Pancreas (tissue), 10 donors: ENCODE measurements at regions of chr17 and their contacts with region 1.

Region 1: GRCh38 chr17:32783602-32784001 is 93.3 kb downstream of the MYO1D start:
- DNase-seq: no peak
- ATAC-seq: peak; percentile 73 to 91 (median 89)
- H3K4me3 ChIP-seq: no peak overlapping the region
- H3K27ac ChIP-seq: no peak overlapping the region
- H3K4me1 ChIP-seq: no peaks in the 10 kb centered on the region
- H3K27me3 ChIP-seq: no peaks in the 10 kb centered on the region
- CTCF ChIP-seq: peak; percentile 52 to 79 (median 68)

Region 2: GRCh38 chr17:32621617-32622312 is 161.8 kb before region 1 on chr17:
- intact Hi-C with region 1: no loop called
- DNase-seq: no peak
- ATAC-seq: no peak
- H3K4me3 ChIP-seq: no peak overlapping the region
- H3K27ac ChIP-seq: no peak overlapping the region
- H3K4me1 ChIP-seq: no peaks in the 10 kb centered on the region
- H3K27me3 ChIP-seq: no peaks in the 10 kb centered on the region
- CTCF ChIP-seq: no peak

Region 3: DNA sequence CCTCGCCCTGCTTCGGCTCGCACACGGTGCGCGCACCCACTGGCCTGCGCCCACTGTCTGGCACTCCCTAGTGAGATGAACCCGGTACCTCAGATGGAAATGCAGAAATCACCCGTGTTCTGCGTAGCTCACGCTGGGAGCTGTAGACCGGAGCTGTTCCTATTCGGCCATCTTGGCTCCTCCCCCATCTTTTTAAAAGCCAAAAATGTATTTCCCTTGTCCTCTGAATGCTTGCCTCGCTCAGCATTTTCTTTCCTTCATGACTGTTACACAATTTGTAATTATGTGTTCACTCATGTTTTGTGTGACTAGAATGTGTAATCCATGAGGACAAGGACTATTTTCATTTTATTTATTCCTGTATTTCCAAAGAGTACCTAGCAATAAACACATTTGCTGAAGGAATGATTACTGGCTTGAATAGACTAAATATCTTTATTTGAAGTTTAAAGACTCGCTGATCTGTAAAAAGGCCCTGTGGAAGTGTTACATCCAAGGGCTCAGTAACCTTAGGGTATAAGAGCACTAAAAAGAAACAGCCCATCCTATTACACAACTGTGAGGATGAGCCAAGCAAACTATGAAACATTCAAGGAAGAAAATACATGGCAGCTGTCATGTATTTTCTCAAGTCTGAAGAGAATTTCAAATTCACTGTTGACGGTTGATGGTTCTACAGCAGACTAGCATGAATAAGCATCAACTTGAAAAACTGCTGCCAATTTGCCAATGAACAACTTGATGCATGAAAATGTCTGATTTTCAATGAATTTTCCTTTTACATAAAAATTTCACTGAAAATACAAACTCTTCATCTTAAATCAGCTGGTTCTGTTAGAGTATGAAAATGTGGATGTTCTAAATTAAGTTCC is 99.3 kb before region 1 on chr17:
- intact Hi-C with region 1: no loop called
- DNase-seq: no peak
- ATAC-seq: no peak
- H3K4me3 ChIP-seq: no peak overlapping the region
- H3K27ac ChIP-seq: no peak overlapping the region
- H3K4me1 ChIP-seq: no peaks in the 10 kb centered on the region
- H3K27me3 ChIP-seq: no peaks in the 10 kb centered on the region
- CTCF ChIP-seq: no peak

Region 4: GRCh38 chr17:32909787-32910369 is 126.3 kb after region 1 on chr17:
- intact Hi-C with region 1: loop called in 1 of 3 experiments (anchors 10 kb)
- DNase-seq: peak in 5 of 6 donors; percentile 59 to 87 (median 81)
- ATAC-seq: peak; percentile 65 to 88 (median 84)
- H3K4me3 ChIP-seq: no peak overlapping the region
- H3K27ac ChIP-seq: peak overlapping the region in 1 of 4 donors; percentile 44
- H3K4me1 ChIP-seq: peaks cover 7 to 18% (median 16%) of the 10 kb centered on the region in 3 donors
- H3K27me3 ChIP-seq: no peaks in the 10 kb centered on the region
- CTCF ChIP-seq: peak; percentile 66 to 82 (median 76)